ENCODE measurements at regions of chr10 and their contacts with region 1.

Region 1: DNA sequence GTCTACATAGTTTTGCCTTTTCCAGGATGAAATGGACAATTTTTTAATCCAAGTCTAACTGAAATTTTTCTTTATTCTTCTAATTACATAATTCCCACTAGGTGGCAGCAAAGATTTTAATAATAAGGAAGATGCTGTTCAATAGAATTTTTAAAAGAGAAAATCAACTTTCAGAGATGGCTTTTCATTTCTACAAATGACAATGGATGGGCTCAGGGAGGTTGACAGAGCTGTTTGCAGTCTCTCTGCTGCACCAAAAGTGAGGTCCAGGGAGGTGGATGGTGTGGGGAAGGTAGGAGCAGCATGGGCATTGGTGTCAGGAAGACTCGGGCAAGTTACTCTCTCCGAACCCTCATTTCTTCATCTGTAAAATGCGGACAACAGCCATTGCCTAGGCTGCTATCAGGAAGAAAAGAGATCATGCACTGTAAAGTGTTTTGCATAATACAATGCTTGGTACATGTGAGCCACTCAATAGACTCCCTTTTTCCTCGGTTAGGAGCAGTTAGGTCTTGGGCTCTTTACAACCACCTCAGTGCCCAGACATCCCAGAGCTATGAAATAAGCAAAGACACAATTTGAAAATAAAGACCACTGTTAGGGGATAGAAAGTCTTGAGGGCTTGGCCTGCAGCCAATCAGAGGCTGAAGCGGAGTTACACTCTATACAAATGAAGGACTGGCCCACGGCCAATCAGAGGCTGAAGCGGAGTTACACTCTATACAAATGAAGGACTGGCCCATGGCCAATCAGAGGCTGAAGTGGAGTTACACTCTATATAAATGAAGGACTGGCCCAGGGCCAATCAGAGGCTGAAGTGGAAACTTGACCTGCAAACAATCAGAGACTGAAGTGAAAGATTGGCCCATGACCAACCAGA is 107.1 kb downstream of the ABLIM1 start:
- DNase-seq: no peak

Region 2: GRCh38 chr10:114304017-114304570 is 246.9 kb before region 1 on chr10:
- intact Hi-C with region 1: loop called (anchors 10 kb)
- DNase-seq: peak; percentile 88

Region 3: DNA sequence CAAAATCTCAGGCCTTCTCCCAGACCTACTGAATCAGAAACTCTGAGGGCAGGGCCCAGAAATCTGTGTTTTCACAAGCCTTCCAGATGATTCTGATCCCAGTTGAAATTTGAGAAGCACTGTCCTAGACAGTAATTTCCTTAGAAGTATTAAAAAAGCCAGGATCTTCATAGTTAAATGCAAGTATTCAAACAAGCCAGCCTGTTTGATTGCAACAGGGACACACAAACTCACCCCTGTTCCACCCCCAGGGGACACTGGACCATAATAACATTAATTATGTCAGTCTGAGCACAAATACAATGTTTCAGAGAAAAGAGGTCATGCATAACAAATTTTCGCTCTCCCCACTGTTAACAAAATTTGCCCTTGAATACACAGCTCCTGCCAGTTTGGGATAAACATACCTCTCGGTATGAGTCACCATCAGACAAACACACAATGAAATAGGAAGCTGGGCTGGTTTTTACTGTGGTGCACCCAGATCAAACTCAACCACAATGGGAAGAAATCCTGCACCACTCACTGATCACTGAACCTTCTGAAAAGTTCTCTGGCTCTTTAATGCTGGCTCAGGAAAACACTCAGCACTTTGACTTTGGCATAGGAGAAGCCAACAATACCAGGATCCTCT is 72.8 kb after region 1 on chr10:
- intact Hi-C with region 1: loop called (anchors 5 kb)
- DNase-seq: no peak

Region 4: DNA sequence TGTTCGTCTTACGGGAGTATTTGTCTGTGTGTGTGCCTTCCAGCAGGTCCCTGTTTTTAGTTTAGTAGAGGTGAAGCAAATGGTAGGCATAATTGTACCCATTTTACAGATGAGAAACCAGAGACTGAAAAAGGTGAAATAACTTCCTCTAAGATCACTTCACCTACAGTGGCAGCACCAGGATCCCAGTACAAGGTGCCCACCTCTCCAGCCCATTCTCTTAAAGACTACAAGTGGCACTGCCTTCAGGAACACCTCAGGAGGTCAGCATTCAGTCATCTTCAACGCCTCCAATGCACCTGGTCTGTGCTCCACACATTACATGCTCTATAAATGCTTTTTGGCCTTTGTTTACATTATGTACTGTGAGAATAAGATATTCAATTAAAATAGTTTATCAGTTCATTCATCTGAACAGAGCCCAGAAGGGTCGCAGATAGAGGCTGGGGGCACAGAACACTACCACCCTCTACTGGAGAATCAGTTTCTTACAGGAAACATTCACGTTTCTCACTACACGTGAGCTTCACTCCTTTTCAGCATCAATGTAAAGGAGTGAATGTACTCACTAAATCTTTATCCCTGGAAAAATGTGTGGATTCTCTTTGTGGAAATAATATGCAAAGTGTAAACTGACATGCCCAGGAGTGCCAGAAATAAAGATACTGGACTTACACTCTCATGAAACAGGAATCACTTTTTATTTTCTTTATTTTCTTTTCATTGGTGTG is 152.5 kb after region 1 on chr10:
- intact Hi-C with region 1: loop called (anchors 5 kb)
- DNase-seq: no peak

Region 5: DNA sequence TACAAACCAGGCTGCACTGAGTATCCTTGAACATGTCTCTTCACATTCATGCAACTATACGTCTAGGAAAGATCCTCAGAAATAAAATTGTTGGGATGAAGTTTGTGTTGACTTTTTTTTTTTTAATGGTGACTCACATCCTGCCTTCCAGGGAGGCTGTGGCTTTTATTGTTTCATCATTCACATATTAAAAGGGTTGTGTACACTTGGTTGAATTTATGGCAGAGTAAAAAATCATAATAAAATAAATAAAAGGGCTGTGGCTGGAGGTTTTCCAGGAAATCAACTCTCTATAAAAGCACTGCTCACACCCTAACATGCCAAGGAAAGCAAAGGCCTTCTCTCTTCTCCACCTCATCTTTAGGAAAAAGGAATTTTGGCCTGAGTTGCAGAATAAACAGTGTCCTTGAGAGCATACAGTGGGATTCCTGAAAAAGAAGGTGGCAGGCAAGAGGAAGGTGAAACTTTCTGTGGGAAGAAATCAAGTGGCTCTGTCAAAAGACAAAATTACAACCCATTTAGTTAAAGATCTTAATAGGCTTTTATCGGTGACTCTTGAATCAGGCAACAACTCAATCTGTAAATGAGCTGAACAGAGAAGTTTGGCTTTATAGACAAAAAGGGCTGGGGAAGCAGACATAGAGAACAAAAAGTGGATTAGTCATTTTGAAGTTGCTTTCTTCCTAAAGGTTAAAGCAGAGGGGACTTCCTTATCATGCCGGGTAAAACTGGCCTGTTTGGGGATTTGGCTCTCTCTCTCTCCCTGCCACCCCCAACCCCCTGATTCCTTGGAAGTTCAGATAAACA is 229.0 kb after region 1 on chr10:
- intact Hi-C with region 1: loop called (anchors 2 kb)
- DNase-seq: no peak